A549 (cell line): ENCODE measurements at regions of chr12 and their contacts with region 1.

Region 1: DNA sequence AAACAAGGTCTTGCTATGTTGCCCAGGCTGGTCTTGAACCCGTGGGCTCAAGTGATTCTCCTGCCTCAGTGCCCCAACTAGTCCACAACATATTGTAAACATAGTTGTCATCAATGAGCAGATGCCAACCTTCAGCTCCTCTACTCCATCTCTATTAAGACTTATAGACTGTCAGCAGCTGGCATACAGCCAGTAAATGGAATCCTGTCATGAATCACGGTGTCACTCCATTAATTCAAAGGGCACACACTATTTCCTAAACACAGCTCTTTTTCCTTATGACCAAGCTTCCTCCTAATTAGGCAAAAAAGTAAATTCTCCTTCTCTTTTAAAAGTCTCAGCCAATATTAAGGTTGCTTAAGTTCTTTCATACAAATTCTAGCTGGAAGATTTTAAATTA is 111.2 kb downstream of the ITPR2 start:
- DNase-seq: peak in 1 of 2 experiments; percentile 5
- ATAC-seq: no peak
- H3K4me3 ChIP-seq: no peak overlapping the region
- H3K27ac ChIP-seq: no peak overlapping the region
- H3K4me1 ChIP-seq: peaks cover 6% of the 10 kb centered on the region; the same call in 1 of the 3 replicates
- CTCF ChIP-seq: no peak
- EP300 ChIP-seq: no peak
- POLR2A ChIP-seq: no peak
- RAD21 ChIP-seq: no peak

Region 2: DNA sequence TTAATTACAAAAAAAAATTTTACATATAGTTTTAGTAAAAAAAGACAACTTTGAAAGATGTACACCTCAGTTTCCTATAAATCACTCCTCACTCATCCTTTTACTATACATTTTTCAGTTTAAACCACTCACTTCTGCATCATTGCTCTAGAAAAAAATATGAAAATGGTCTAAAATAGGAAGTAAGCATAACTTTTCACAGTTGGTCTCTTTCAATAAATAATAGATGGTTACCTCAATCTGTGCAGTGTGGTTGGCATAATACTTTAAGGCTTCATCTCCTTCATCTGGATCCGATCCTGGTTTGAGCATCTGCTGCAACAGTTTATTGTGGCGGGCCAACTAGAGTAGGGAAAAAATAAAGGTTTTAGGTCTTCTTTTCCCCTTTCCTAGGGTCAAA is 278.5 kb before region 1 on chr12:
- CTCF ChIA-PET with region 1: no interaction called
- POLR2A ChIA-PET with region 1: no interaction called
- DNase-seq: no peak
- ATAC-seq: no peak
- H3K4me3 ChIP-seq: no peak overlapping the region
- H3K27ac ChIP-seq: no peak overlapping the region
- H3K4me1 ChIP-seq: no peaks in the 10 kb centered on the region
- CTCF ChIP-seq: no peak
- EP300 ChIP-seq: no peak
- POLR2A ChIP-seq: no peak
- RAD21 ChIP-seq: no peak

Region 3: DNA sequence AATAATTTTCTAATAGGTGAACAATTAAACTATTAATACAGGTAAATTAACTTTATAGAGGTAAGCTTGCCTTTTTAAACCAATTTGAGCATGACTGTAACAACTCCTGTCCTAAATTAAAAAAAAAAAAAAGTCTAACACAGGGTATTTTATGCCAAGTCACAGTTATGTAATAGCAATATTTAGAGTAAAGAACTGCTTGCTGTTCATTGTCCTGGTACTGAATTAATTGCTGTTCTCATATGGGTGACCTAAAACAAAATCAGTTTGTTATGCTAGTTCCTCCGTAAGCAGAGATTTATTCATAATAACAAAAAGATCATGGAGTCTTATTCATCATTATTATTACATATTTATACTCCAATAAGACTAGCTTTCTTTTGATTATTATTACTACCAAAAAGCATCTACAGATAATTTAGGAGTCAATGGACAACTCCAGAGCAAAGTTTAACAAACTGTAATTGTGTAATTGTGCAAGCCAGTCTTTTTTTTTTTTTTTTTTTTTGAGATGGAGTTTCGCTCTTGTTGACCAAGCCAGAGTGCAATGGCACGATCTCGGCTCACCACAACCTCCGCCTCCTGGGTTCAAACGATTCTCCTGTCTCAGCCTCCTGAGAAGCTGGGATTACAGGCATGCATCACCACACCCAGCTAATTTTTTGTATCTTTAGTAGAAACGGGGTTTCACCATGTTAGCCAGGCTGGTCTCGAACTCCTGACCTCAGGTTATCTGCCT is 12.9 kb after region 1 on chr12:
- CTCF ChIA-PET with region 1: interaction called, 3 read pairs
- POLR2A ChIA-PET with region 1: interaction called, 12 read pairs
- DNase-seq: no peak
- ATAC-seq: no peak
- H3K4me3 ChIP-seq: no peak overlapping the region
- H3K27ac ChIP-seq: no peak overlapping the region
- H3K4me1 ChIP-seq: peaks cover 7% of the 10 kb centered on the region
- CTCF ChIP-seq: no peak
- EP300 ChIP-seq: no peak
- POLR2A ChIP-seq: no peak
- RAD21 ChIP-seq: no peak